Esophagus muscularis mucosa (tissue), 4 donors: ENCODE measurements at regions of chr16 and their contacts with region 1.

Region 1: GRCh38 chr16:84062734-84063640 is 20.4 kb upstream of the SLC38A8 start:
- DNase-seq: peak; percentile 95
- H3K4me3 ChIP-seq: no peak overlapping the region
- H3K27ac ChIP-seq: no peak overlapping the region
- H3K4me1 ChIP-seq: peaks cover 0 to 9% (median 8%) of the 10 kb centered on the region in 4 donors
- H3K27me3 ChIP-seq: no peaks in the 10 kb centered on the region
- CTCF ChIP-seq: peak; percentile 70 to 86 (median 72)
- EP300 ChIP-seq: no peak
- POLR2A ChIP-seq: no peak

Region 2: DNA sequence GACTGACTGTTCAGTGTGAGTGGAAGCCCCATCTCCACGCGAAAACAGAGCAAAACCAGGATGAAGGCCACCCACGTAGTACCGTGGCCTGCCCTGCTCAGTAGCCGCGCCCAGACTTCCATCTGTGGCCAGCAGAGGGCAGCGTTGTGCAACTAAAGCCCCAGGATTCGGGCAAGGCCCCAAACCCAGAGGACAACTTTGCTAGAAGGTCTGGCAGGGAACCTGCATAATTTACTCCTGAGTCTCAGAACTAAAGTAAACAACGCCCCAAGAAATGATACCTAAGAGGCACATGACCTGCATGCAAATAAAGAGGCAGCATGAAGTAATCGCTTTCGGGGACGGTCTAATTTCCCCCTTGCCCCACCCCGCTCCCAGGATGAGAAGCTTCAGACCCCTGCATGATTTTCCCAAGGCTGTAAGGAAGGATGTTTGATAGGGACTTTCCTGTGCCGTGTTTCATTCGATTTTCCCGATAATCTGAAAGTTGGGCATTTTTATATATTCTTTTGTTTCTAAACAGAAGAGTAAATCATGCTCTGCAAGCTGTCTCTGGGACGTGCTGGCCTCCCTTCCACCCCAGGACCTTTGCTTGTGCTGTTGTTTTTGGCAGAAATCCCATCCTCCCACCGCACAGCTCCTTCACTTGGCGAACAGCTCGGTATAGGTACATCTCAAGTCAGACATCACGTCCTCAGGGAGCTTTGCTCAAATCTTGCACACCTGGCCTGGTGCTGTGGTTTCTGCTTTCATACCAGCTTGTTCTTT is 236.7 kb before region 1 on chr16:
- intact Hi-C with region 1: loop called (anchors 5 kb)
- DNase-seq: peak; percentile 95
- H3K4me3 ChIP-seq: no peak overlapping the region
- H3K27ac ChIP-seq: no peak overlapping the region
- H3K4me1 ChIP-seq: peaks cover 0 to 11% (median 7%) of the 10 kb centered on the region in 4 donors
- H3K27me3 ChIP-seq: no peaks in the 10 kb centered on the region
- CTCF ChIP-seq: peak; percentile 90 to 95 (median 90)
- EP300 ChIP-seq: no peak
- POLR2A ChIP-seq: no peak

Region 3: GRCh38 chr16:83926726-83927397 is 136.1 kb before region 1 on chr16:
- intact Hi-C with region 1: loop called (anchors 10 kb)
- DNase-seq: no peak
- H3K4me3 ChIP-seq: no peak overlapping the region
- H3K27ac ChIP-seq: peak overlapping the region in 1 of 4 donors; percentile 15
- H3K4me1 ChIP-seq: peaks cover 9 to 14% (median 13%) of the 10 kb centered on the region in 4 donors
- H3K27me3 ChIP-seq: no peaks in the 10 kb centered on the region
- CTCF ChIP-seq: peak; percentile 87 to 99 (median 89)
- EP300 ChIP-seq: no peak
- POLR2A ChIP-seq: no peak

Region 4: GRCh38 chr16:83967806-83968305 is 95.1 kb before region 1 on chr16 and contains the start of gene NECAB2:
- intact Hi-C with region 1: loop called (anchors 2 kb)
- DNase-seq: no peak
- H3K4me3 ChIP-seq: peak within 1 kb of the TSS; percentile 36 to 56 (median 48)
- H3K27ac ChIP-seq: no peak within 1 kb of the TSS
- H3K4me1 ChIP-seq: peaks cover 0 to 14% (median 10%) of the 10 kb centered on the region in 4 donors
- H3K27me3 ChIP-seq: peaks cover 0 to 24% (median 0%) of the 10 kb centered on the region in 4 donors
- CTCF ChIP-seq: peak; percentile 56 to 76 (median 63)
- EP300 ChIP-seq: no peak
- POLR2A ChIP-seq: no peak
- total RNA-seq, gene NECAB2: not detected